ENCODE measurements at regions of chr2 and their contacts with region 1.

Region 1: DNA sequence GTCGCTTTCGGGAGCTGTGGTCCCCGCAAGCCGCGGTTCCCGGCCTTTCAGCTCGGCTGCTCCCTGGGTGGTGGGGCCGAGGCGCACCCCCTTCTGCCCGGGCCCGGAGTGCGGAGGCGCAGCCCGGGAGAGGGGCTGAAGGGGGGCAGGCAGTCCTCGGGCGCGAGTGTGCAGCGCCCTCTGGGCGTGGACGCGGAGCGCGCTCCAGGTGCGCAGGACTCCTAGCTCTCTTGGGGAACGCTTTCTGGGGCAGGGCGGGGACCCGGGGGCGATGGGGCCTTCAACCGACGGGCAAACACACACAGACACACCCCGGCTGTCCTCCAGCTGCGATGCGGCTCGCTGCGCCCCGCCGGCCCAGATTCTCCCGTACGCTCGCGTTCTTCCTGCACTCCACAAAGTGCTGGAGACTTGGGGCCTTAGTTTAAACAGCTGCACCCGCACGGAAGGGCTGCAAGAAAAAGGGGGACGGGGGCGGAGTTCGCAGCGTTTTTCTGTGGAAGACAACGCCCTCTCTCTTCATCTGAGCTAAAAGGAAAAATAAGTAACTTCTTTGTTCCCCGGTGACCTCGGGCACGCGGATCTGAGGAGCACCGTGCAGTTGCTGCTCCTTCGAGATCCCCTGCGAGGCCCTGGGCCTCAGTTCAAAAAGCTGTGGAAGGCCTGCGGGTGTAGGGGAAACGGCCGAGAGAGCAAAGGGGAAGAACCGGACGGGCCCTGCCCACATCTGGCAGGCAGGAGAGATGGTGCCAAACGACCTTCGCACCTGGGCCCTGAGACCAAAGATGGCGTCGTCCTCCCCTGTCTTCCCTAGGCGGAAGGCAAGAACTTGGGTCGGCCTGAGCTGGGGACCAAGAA is 593 bp upstream of the SDC1 start:
- DNase-seq: no peak
- H3K4me3 ChIP-seq: peak overlapping the region; percentile 65 to 71 (median 69)
- H3K27ac ChIP-seq: peak overlapping the region; percentile 58 to 75 (median 72)
- H3K4me1 ChIP-seq: peaks cover 16 to 34% (median 29%) of the 10 kb centered on the region in 4 donors
- H3K27me3 ChIP-seq: peaks cover 0 to 23% (median 0%) of the 10 kb centered on the region in 4 donors
- CTCF ChIP-seq: peak; percentile 52 to 56 (median 54)
- EP300 ChIP-seq: no peak
- POLR2A ChIP-seq: no peak

Region 2: GRCh38 chr2:20106746-20107145 is 118.8 kb before region 1 on chr2:
- intact Hi-C with region 1: loop called (anchors 10 kb)
- DNase-seq: no peak
- H3K4me3 ChIP-seq: peak overlapping the region; percentile 37 to 50 (median 40)
- H3K27ac ChIP-seq: no peak overlapping the region
- H3K4me1 ChIP-seq: peaks cover 9 to 10% (median 9%) of the 10 kb centered on the region in 4 donors
- H3K27me3 ChIP-seq: peaks cover 0 to 16% (median 0%) of the 10 kb centered on the region in 4 donors
- CTCF ChIP-seq: peak; percentile 57 to 71 (median 64)
- EP300 ChIP-seq: no peak
- POLR2A ChIP-seq: no peak

Region 3: DNA sequence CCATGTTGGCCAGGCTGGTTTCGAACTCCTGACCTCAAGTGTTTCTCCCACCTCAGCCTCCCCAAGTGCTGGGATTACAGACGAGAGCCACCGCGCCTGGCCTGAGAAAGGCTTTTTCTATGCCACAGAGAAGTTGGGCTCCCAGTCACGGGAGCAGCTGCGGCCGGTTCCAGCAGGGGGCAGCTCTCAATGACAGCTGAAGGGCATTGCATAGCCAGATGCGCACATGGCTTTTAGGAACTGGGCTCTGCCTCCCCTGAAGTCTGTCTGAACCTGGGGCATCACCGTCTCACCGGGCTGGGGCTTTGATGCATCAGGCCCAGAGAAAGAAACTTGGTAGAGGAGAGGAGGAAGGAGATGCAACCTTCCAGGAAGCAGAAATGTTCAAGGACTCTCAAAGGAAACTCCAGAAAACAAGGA is 89.9 kb before region 1 on chr2:
- intact Hi-C with region 1: loop called (anchors 10 kb)
- DNase-seq: no peak
- H3K4me3 ChIP-seq: no peak overlapping the region
- H3K27ac ChIP-seq: no peak overlapping the region
- H3K4me1 ChIP-seq: no peaks in the 10 kb centered on the region
- H3K27me3 ChIP-seq: no peaks in the 10 kb centered on the region
- CTCF ChIP-seq: peak; percentile 49 to 59 (median 58)
- EP300 ChIP-seq: no peak
- POLR2A ChIP-seq: no peak

Measured in esophagus muscularis mucosa (tissue), 4 donors.